A673 (cell line): ENCODE measurements at regions of chr3 and their contacts with region 1.

Region 1: GRCh38 chr3:120567370-120568201 is 28.6 kb upstream of the NDUFB4 start:
- DNase-seq: peak; percentile 51
- H3K4me3 ChIP-seq: peak overlapping the region; percentile 16
- H3K27ac ChIP-seq: no peak overlapping the region
- H3K4me1 ChIP-seq: no peaks in the 10 kb centered on the region
- H3K27me3 ChIP-seq: no peaks in the 10 kb centered on the region
- CTCF ChIP-seq: peak; percentile 60

Region 2: DNA sequence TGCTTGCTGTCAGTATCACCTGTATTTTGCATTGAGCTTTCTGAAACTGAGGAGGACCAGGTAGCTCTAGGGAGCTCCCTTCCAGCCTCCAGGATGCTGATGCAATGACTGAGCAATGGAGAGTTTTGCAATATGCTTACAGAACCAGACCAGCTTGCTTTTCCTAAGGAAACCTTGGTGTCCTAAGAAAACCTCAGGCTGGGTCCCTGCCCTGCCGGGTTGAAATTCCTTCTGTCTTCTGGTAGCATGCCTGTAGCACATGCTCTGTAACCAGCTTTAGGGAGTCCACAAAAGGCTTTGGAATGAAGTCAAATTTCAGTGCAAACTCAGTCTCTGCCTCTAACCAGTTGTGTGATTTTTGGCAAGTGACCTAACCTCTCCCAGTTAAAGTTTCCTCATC is 407.5 kb before region 1 on chr3:
- CTCF ChIA-PET with region 1: no interaction called
- POLR2A ChIA-PET with region 1: no interaction called
- intact Hi-C with region 1: no loop called
- DNase-seq: no peak
- H3K4me3 ChIP-seq: no peak overlapping the region
- H3K27ac ChIP-seq: no peak overlapping the region
- H3K4me1 ChIP-seq: no peaks in the 10 kb centered on the region
- H3K27me3 ChIP-seq: no peaks in the 10 kb centered on the region
- CTCF ChIP-seq: no peak

Region 3: GRCh38 chr3:120795017-120795648 is 227.5 kb after region 1 on chr3:
- CTCF ChIA-PET with region 1: interaction called, 10 read pairs
- POLR2A ChIA-PET with region 1: no interaction called
- intact Hi-C with region 1: no loop called
- DNase-seq: peak; percentile 84
- H3K4me3 ChIP-seq: no peak overlapping the region
- H3K27ac ChIP-seq: no peak overlapping the region
- H3K4me1 ChIP-seq: no peaks in the 10 kb centered on the region
- H3K27me3 ChIP-seq: no peaks in the 10 kb centered on the region
- CTCF ChIP-seq: peak; percentile 94